Endothelial cell of umbilical vein (primary cell): ENCODE measurements at regions of chr9 and their contacts with region 1.

Region 1: DNA sequence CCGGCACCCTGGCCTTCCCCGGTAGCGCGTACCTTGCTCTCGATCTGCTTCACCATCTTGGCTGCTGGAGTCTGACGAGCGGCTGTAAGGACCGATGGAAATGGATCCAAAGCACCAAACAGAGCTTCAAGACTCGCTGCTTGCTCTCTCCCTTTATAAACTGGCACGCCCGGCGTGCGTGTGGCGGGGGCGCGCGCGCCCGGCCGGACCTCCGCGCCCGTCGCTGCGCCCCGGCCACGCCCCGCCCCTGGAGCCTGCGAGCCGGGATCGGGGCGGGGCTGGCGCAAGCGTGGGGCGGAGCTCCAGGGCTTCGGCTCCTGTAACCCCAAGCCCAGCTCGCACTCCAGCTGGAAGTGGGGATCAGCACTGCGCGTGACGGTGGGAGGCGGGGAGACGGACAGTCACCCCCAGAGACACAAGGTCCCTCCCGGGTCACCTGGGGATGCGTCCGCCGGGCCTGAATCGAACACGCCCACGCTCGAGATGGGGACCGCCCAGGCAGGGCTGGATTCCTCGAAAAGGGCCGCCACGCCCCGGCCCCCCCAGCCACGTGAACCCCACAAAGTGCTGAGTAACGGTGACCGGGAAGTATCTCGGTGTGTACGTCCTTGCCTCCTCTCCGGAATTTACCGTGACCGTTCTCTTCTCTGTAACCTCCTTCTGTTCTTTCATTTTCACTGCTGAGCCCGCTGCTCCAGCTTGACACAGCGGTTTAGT is at the start of gene TXN:
- DNase-seq: peak; percentile 85
- H3K4me3 ChIP-seq: peak within 1 kb of the TSS; percentile 40 to 93 (median 77)
- H3K27ac ChIP-seq: peak within 1 kb of the TSS; percentile 67
- H3K4me1 ChIP-seq: peaks cover 23% of the 10 kb centered on the region
- H3K27me3 ChIP-seq: no peaks in the 10 kb centered on the region
- CTCF ChIP-seq: no peak
- POLR2A ChIP-seq: peak; percentile 96
- total RNA-seq, gene TXN: 280 and 286 TPM in 2 replicates

Region 2: GRCh38 chr9:110270211-110270995 is 13.9 kb after region 1 on chr9:
- CTCF ChIA-PET with region 1: interaction called, 29 read pairs
- POLR2A ChIA-PET with region 1: interaction called, 4 read pairs
- dilution Hi-C with region 1: no loop called
- intact Hi-C with region 1: no loop called
- DNase-seq: no peak
- H3K4me3 ChIP-seq: no peak overlapping the region
- H3K27ac ChIP-seq: no peak overlapping the region
- H3K4me1 ChIP-seq: no peaks in the 10 kb centered on the region
- H3K27me3 ChIP-seq: peaks cover 7 to 8% of the 10 kb centered on the region in 2 experiments
- CTCF ChIP-seq: no peak
- POLR2A ChIP-seq: no peak